Activated CD8-positive, alpha-beta T cell treated with anti-CD3 and anti-CD28 coated beads, Interleukin-2, amount 10 ng/mL, durations not matched to agents 7 days and 5 days (primary cell): ENCODE measurements at regions of chr1 and their contacts with region 1.

Region 1: GRCh38 chr1:67053785-67054772 is at the start of gene SLC35D1:
- DNase-seq: peak; percentile 79
- ATAC-seq: peak; percentile 81
- H3K4me3 Mint-ChIP-seq: peak within 1 kb of the TSS; percentile 77
- H3K27ac Mint-ChIP-seq: peak within 1 kb of the TSS; percentile 91
- H3K4me1 Mint-ChIP-seq: peaks cover 20% of the 10 kb centered on the region
- H3K27me3 Mint-ChIP-seq: peaks cover 10% of the 10 kb centered on the region
- total RNA-seq, gene SLC35D1: 11.2 to 11.4 TPM

Region 2: DNA sequence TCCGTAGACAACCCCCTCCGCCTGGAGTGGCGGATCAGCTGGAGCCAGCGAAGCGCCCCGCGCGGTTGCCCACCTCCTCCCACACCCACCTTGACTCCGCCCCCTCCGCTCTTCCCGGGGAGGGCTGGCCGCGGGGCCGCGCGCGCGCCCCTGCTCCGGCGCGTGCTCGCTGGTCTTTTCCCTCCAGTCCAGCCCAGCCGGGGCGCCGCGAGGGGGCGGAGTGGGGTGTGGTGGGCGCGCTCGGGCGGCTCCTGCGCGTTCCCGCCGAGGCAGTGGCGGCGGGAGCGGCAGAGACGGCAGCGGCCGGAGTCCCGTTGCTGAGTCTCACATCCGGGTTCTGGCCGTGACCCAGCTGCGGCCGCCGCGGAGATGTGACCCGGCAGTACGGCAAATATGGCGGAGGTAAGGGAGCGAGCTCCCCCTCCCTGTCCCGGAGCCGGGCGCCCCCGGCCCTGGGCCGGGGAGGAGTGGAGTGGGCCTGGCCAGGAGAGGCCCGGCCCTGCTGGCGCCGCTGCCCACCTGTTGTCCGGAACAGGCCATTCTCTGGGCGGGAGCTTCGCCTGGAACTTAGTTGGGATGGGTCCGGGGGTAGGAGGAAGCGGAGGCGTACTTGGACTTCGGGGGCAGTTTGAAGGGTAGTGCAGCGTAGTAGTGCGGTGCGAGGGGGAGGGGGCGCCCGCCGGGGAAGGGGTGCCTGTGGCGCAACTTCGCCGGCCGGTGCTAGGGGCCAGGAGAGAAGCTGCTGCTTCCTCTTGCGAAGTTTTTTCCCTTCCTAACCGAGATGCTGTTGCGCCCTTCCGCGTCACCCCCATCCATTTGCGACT is 123.9 kb before region 1 on chr1:
- CTCF ChIA-PET with region 1: interaction called, 6 read pairs
- POLR2A ChIA-PET with region 1: interaction called, 11 read pairs
- DNase-seq: peak; percentile 94
- ATAC-seq: peak; percentile 65
- H3K4me3 Mint-ChIP-seq: peak overlapping the region; percentile 81
- H3K27ac Mint-ChIP-seq: peak overlapping the region; percentile 84
- H3K4me1 Mint-ChIP-seq: peaks cover 61% of the 10 kb centered on the region
- H3K27me3 Mint-ChIP-seq: no peaks in the 10 kb centered on the region

Region 3: GRCh38 chr1:67126111-67126746 is 72.2 kb after region 1 on chr1:
- CTCF ChIA-PET with region 1: no interaction called
- POLR2A ChIA-PET with region 1: no interaction called
- DNase-seq: no peak
- ATAC-seq: no peak
- H3K4me3 Mint-ChIP-seq: no peak overlapping the region
- H3K27ac Mint-ChIP-seq: no peak overlapping the region
- H3K4me1 Mint-ChIP-seq: peaks cover 6% of the 10 kb centered on the region
- H3K27me3 Mint-ChIP-seq: peaks cover 3% of the 10 kb centered on the region